CD4-positive, alpha-beta memory T cell (primary cell): ENCODE measurements at regions of chr2 and their contacts with region 1.

Region 1: GRCh38 chr2:210002158-210003157 is at the start of gene RPE:
- DNase-seq: peak; percentile 95 to 96 (median 95)
- H3K4me3 ChIP-seq: peak within 1 kb of the TSS; percentile 85 to 99
- H3K4me3 Mint-ChIP-seq: peak within 1 kb of the TSS; percentile 88 to 98 (median 94)
- H3K27ac ChIP-seq: peak within 1 kb of the TSS; percentile 68
- H3K27ac Mint-ChIP-seq: peak within 1 kb of the TSS; percentile 86 to 97 (median 94)
- H3K4me1 ChIP-seq: peaks cover 40% of the 10 kb centered on the region
- H3K4me1 Mint-ChIP-seq: peaks cover 32 to 63% (median 47%) of the 10 kb centered on the region in 4 donors
- H3K27me3 ChIP-seq: no peaks in the 10 kb centered on the region
- H3K27me3 Mint-ChIP-seq: peaks cover 0 to 2% of the 10 kb centered on the region in 2 donors
- total RNA-seq, gene RPE: 37.3 to 39.9 TPM

Region 2: GRCh38 chr2:208265801-208266552 is 1736.5 kb before region 1 on chr2 and contains the start of gene PIKFYVE:
- CTCF ChIA-PET with region 1: no interaction called
- POLR2A ChIA-PET with region 1: no interaction called
- intact Hi-C with region 1: loop called (anchors 5 kb)
- DNase-seq: peak; percentile 80 to 92 (median 87)
- H3K4me3 ChIP-seq: peak within 1 kb of the TSS; percentile 51 to 95
- H3K4me3 Mint-ChIP-seq: peak within 1 kb of the TSS; percentile 92 to 99 (median 96)
- H3K27ac ChIP-seq: peak within 1 kb of the TSS; percentile 75
- H3K27ac Mint-ChIP-seq: peak within 1 kb of the TSS; percentile 86 to 97 (median 95)
- H3K4me1 ChIP-seq: peaks cover 46% of the 10 kb centered on the region
- H3K4me1 Mint-ChIP-seq: peaks cover 27 to 60% (median 39%) of the 10 kb centered on the region in 4 donors
- H3K27me3 ChIP-seq: no peaks in the 10 kb centered on the region
- H3K27me3 Mint-ChIP-seq: no peaks in the 10 kb centered on the region
- total RNA-seq, gene PIKFYVE: 44.5 to 45.8 TPM

Region 3: DNA sequence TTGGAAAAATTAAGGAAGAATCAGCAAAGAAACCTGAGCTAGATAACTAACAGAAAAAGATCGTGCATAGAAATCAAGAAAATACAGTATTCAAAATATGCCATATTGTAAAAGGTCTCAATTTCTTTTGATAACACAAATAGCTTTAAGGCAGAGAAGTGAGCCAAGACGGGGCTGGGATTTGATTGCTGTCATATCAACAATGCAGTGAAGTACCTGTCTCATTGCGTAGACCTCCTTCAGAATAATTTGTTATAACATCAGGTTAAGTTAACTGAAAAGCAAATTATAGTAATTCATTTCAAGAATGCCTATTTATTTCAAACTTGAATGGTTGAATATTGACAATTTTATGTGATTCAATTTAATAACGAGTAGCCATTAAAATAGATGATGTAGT is 1032.4 kb before region 1 on chr2:
- CTCF ChIA-PET with region 1: no interaction called
- POLR2A ChIA-PET with region 1: no interaction called
- intact Hi-C with region 1: no loop called
- DNase-seq: no peak
- H3K4me3 ChIP-seq: no peak overlapping the region
- H3K4me3 Mint-ChIP-seq: no peak overlapping the region
- H3K27ac ChIP-seq: no peak overlapping the region
- H3K27ac Mint-ChIP-seq: no peak overlapping the region
- H3K4me1 ChIP-seq: no peaks in the 10 kb centered on the region
- H3K4me1 Mint-ChIP-seq: no peaks in the 10 kb centered on the region
- H3K27me3 ChIP-seq: no peaks in the 10 kb centered on the region
- H3K27me3 Mint-ChIP-seq: no peaks in the 10 kb centered on the region

Region 4: GRCh38 chr2:210171309-210172203 is 169.1 kb after region 1 on chr2 and contains the start of gene KANSL1L:
- CTCF ChIA-PET with region 1: no interaction called
- POLR2A ChIA-PET with region 1: no interaction called
- intact Hi-C with region 1: loop called (anchors 1 kb)
- DNase-seq: peak; percentile 92 to 94 (median 93)
- H3K4me3 ChIP-seq: peak within 1 kb of the TSS; percentile 81 to 97
- H3K4me3 Mint-ChIP-seq: peak within 1 kb of the TSS; percentile 96 to 99 (median 98)
- H3K27ac ChIP-seq: peak within 1 kb of the TSS; percentile 65
- H3K27ac Mint-ChIP-seq: peak within 1 kb of the TSS; percentile 96 to 99 (median 98)
- H3K4me1 ChIP-seq: peaks cover 18% of the 10 kb centered on the region
- H3K4me1 Mint-ChIP-seq: peaks cover 9 to 28% (median 18%) of the 10 kb centered on the region in 4 donors
- H3K27me3 ChIP-seq: no peaks in the 10 kb centered on the region
- H3K27me3 Mint-ChIP-seq: peaks cover 0 to 8% of the 10 kb centered on the region in 2 donors
- total RNA-seq, gene KANSL1L: 10.7 to 12.1 TPM

Region 5: GRCh38 chr2:210476194-210477128 is 474.0 kb after region 1 on chr2 and contains the start of gene LANCL1:
- CTCF ChIA-PET with region 1: no interaction called
- POLR2A ChIA-PET with region 1: interaction called, 3 read pairs
- intact Hi-C with region 1: loop called (anchors 2 kb)
- DNase-seq: peak; percentile 76 to 83 (median 80)
- H3K4me3 ChIP-seq: peak within 1 kb of the TSS; percentile 74 to 82
- H3K4me3 Mint-ChIP-seq: peak within 1 kb of the TSS; percentile 99 to 100 (median 100)
- H3K27ac ChIP-seq: peak within 1 kb of the TSS; percentile 87
- H3K27ac Mint-ChIP-seq: peak within 1 kb of the TSS; percentile 95 to 100 (median 99)
- H3K4me1 ChIP-seq: peaks cover 44% of the 10 kb centered on the region
- H3K4me1 Mint-ChIP-seq: peaks cover 45 to 72% (median 61%) of the 10 kb centered on the region in 4 donors
- H3K27me3 ChIP-seq: no peaks in the 10 kb centered on the region
- H3K27me3 Mint-ChIP-seq: no peaks in the 10 kb centered on the region
- total RNA-seq, gene LANCL1: 30.2 to 32.8 TPM